WTC11 (cell line): ENCODE measurements at regions of chr14 and their contacts with region 1.

Region 1: DNA sequence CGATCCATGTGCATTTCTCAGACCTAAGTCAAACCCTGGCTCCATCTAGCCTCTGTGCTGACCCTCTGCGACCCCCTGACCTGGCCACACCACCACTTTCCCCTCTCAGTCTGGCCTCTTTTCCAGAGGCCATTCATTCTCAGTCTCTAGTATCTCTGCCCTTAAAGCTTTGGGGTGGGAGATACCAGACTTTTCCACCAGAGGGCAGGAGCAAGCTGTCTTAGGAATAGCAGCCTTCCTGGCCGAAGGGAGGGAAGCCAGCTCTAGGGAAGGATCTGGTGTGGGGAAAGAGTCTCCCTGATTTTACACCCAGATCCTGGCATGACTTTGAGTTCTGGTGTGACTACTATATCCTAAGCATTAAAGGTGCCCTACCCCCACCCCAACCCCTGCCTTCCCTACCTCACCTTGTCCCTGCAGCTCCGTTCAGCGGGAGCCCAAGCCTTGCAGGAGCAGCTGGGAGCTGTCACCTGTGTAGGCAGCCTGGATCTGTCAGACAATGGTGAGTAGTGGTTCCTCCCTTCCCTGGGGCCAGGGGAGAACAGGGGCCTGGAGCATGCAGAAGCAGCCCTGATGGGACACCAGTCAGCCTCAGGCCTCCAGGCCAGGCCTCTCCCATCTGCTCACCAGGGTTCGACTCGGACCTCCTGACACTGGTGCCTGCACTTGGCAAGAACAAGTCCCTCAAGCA is 6.6 kb downstream of the CARMIL3 start:
- DNase-seq: peak; percentile 88
- ATAC-seq: peak; percentile 87
- H3K4me3 Mint-ChIP-seq: no peak overlapping the region
- H3K27ac Mint-ChIP-seq: no peak overlapping the region; the same call in 1 of the 2 replicates
- H3K4me1 Mint-ChIP-seq: peaks cover 6% of the 10 kb centered on the region
- H3K27me3 Mint-ChIP-seq: no peaks in the 10 kb centered on the region
- CTCF ChIP-seq: peak; percentile 73

Region 2: GRCh38 chr14:23727566-23728335 is 330.7 kb before region 1 on chr14:
- CTCF ChIA-PET with region 1: no interaction called
- POLR2A ChIA-PET with region 1: no interaction called
- DNase-seq: no peak
- ATAC-seq: peak; percentile 86
- H3K4me3 Mint-ChIP-seq: no peak overlapping the region
- H3K27ac Mint-ChIP-seq: no peak overlapping the region
- H3K4me1 Mint-ChIP-seq: no peaks in the 10 kb centered on the region
- H3K27me3 Mint-ChIP-seq: no peaks in the 10 kb centered on the region
- CTCF ChIP-seq: peak; percentile 61

Region 3: GRCh38 chr14:24080888-24081738 is 22.7 kb after region 1 on chr14:
- CTCF ChIA-PET with region 1: interaction called, 101 read pairs
- POLR2A ChIA-PET with region 1: interaction called, 6 read pairs
- DNase-seq: peak; percentile 69
- ATAC-seq: peak; percentile 76
- H3K4me3 Mint-ChIP-seq: peak overlapping the region; percentile 79
- H3K27ac Mint-ChIP-seq: peak overlapping the region; percentile 21
- H3K4me1 Mint-ChIP-seq: peaks cover 32% of the 10 kb centered on the region
- H3K27me3 Mint-ChIP-seq: peaks cover 26% of the 10 kb centered on the region
- CTCF ChIP-seq: no peak

Region 4: DNA sequence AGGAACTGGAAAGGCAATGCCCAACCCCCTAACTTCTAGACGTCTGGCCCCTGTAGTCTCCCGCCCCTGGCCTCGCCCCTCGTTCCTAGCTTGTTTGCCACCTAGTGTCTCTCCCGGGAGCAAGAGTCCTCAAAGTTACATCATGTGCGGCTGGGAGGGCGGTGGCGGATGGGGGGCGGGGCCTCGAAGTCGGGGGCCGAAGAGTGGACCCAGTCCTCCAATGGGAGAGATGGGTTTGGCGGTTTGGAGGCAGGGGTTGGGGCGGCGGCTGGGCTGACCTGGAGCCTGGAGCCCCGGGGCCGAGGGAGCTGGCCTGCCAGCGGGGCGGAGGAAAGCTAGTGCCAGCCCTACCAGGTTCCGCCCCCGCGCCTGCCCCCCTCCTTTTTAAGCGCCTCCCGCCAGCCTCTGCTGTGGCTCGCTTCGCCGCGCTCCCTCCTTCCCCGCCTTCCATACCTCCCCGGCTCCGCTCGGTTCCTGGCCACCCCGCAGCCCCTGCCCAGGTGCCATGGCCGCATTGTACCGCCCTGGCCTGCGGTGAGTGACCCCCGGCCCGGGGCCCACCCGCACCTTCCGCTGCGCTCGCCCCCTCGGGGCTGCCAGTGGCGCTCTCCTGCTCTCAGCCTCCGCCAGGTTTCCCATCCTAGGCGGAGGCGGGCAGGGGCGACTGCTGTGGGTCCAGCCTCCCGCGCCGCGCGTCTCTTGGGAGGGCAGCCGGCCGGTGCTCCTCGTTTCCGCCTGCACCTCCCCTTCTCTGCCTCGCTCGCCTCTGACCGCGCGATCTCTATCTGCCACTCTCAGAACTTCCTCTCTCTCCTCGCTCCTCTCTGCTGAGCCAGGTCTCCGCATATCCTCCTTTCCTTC is 35.7 kb after region 1 on chr14 and contains the start of gene PCK2:
- CTCF ChIA-PET with region 1: interaction called, 320 read pairs
- POLR2A ChIA-PET with region 1: interaction called, 38 read pairs
- DNase-seq: peak; percentile 98
- ATAC-seq: peak; percentile 93
- H3K4me3 Mint-ChIP-seq: peak within 1 kb of the TSS; percentile 98
- H3K27ac Mint-ChIP-seq: peak within 1 kb of the TSS; percentile 98
- H3K4me1 Mint-ChIP-seq: peaks cover 32% of the 10 kb centered on the region
- H3K27me3 Mint-ChIP-seq: peaks cover 10% of the 10 kb centered on the region
- CTCF ChIP-seq: no peak
- total RNA-seq, gene PCK2: 51.2 to 67.0 TPM (median 59.2 TPM) in 3 replicates

Region 5: GRCh38 chr14:24114536-24115450 is 56.4 kb after region 1 on chr14 and contains the starts of genes DCAF11 and NRL:
- CTCF ChIA-PET with region 1: interaction called, 254 read pairs
- POLR2A ChIA-PET with region 1: interaction called, 13 read pairs
- DNase-seq: peak; percentile 98
- ATAC-seq: peak; percentile 86
- H3K4me3 Mint-ChIP-seq: peak within 1 kb of the TSS; percentile 99
- H3K27ac Mint-ChIP-seq: peak within 1 kb of the TSS; percentile 99
- H3K4me1 Mint-ChIP-seq: peaks cover 17% of the 10 kb centered on the region
- H3K27me3 Mint-ChIP-seq: peaks cover 4% of the 10 kb centered on the region; the same call in 1 of the 2 replicates
- CTCF ChIP-seq: no peak
- total RNA-seq, gene DCAF11: 73.6 to 90.2 TPM (median 77.3 TPM) in 3 replicates
- total RNA-seq, gene NRL: 1.3 to 2.3 TPM (median 1.6 TPM) in 3 replicates

Region 6: GRCh38 chr14:24141097-24141880 is 82.9 kb after region 1 on chr14 and contains the start of gene EMC9:
- CTCF ChIA-PET with region 1: interaction called, 28 read pairs
- POLR2A ChIA-PET with region 1: no interaction called
- DNase-seq: peak; percentile 100
- ATAC-seq: peak; percentile 89
- H3K4me3 Mint-ChIP-seq: peak within 1 kb of the TSS; percentile 95
- H3K27ac Mint-ChIP-seq: peak within 1 kb of the TSS; percentile 99
- H3K4me1 Mint-ChIP-seq: peaks cover 35% of the 10 kb centered on the region
- H3K27me3 Mint-ChIP-seq: no peaks in the 10 kb centered on the region
- CTCF ChIP-seq: no peak
- total RNA-seq, gene EMC9: 41.3 to 47.9 TPM (median 44.4 TPM) in 3 replicates

Region 7: GRCh38 chr14:24215495-24216344 is 157.3 kb after region 1 on chr14 and contains the start of gene MDP1:
- CTCF ChIA-PET with region 1: interaction called, 10 read pairs
- POLR2A ChIA-PET with region 1: interaction called, 3 read pairs
- DNase-seq: peak; percentile 85
- ATAC-seq: peak; percentile 71
- H3K4me3 Mint-ChIP-seq: peak within 1 kb of the TSS; percentile 96
- H3K27ac Mint-ChIP-seq: peak within 1 kb of the TSS; percentile 97
- H3K4me1 Mint-ChIP-seq: peaks cover 23% of the 10 kb centered on the region
- H3K27me3 Mint-ChIP-seq: no peaks in the 10 kb centered on the region; the same call in 1 of the 2 replicates
- CTCF ChIP-seq: no peak
- total RNA-seq, gene MDP1: 12.6 to 18.4 TPM (median 16.9 TPM) in 3 replicates

Region 8: DNA sequence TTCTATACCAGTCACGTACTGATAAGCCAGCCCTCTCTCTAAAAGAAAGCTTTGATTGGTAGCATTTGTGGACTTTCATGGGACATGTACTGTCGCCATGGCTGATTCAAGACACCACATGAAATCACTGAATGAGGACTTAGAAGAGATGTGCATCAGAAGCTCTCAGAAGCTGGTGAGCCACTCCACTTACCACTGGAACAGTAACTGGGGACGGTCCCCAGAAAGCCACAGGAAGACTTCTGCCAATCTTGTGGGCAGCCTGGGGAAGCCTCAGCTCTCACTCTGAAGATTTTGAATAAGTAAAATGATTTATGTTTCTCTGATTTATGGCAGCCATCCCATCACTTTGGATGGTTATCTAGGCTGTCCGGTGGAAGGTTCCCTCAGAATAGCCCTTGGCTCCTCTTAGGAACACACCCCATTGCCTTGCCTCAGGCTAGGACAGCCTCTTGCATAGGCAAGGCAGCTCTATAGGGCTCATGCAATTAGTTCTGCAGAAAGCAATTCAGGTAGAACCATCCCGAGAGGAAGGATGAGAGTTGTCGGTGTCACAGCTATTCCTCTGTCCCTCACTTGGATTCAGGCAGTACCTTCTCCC is 231.3 kb after region 1 on chr14:
- CTCF ChIA-PET with region 1: no interaction called
- POLR2A ChIA-PET with region 1: no interaction called
- DNase-seq: no peak
- ATAC-seq: no peak
- H3K4me3 Mint-ChIP-seq: no peak overlapping the region
- H3K27ac Mint-ChIP-seq: no peak overlapping the region
- H3K4me1 Mint-ChIP-seq: no peaks in the 10 kb centered on the region
- H3K27me3 Mint-ChIP-seq: no peaks in the 10 kb centered on the region
- CTCF ChIP-seq: no peak